ENCODE measurements at regions of chr5 and their contacts with region 1.

Region 1: GRCh38 chr5:140664359-140665119 is at the start of gene WDR55:
- DNase-seq: peak; percentile 94
- H3K4me3 Mint-ChIP-seq: peak within 1 kb of the TSS; percentile 100
- H3K27ac Mint-ChIP-seq: peak within 1 kb of the TSS; percentile 93
- H3K4me1 Mint-ChIP-seq: peaks cover 28% of the 10 kb centered on the region
- H3K27me3 Mint-ChIP-seq: no peaks in the 10 kb centered on the region
- total RNA-seq, gene WDR55: 42.7 and 43.2 TPM in 2 replicates

Region 2: DNA sequence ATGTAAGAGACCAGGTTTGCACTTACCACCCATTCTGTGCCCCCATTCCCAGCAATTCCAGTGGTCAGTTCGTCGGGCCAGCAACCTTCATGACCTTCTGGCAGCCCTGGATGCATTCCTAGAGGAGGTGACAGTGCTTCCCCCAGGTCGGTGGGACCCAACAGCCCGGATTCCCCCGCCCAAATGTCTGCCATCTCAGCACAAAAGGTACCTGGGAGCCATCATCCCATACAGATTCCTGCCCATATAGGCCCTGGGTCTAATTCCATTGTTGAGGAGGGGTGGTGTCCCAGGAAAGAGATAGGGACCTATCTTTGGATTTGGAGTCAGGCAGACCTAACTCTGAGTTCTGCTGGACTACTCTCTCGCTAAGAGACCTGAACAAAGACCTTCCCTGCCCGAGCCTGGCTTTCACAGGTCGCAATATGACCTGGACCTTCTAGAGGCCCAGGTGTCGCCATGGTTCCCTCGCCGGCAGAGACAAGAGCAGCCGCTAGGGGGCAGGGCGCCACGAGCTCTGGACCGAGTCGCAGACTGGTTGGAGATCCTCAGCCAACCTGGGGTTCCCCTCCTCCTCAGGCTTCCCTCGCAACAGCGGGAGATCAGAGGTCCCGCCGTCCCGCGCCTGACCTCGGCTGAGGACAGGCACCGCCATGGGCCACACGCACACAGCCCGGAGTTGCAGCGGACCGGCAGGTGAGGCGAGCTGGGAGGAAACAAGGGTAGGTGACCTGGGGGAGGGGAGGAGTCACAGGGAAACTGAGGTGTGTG is 301.5 kb before region 1 on chr5:
- intact Hi-C with region 1: loop called (anchors 1 kb)
- DNase-seq: peak; percentile 79
- H3K4me3 Mint-ChIP-seq: peak overlapping the region; percentile 79
- H3K27ac Mint-ChIP-seq: peak overlapping the region; percentile 73
- H3K4me1 Mint-ChIP-seq: peaks cover 6% of the 10 kb centered on the region
- H3K27me3 Mint-ChIP-seq: peaks cover 2% of the 10 kb centered on the region

Region 3: DNA sequence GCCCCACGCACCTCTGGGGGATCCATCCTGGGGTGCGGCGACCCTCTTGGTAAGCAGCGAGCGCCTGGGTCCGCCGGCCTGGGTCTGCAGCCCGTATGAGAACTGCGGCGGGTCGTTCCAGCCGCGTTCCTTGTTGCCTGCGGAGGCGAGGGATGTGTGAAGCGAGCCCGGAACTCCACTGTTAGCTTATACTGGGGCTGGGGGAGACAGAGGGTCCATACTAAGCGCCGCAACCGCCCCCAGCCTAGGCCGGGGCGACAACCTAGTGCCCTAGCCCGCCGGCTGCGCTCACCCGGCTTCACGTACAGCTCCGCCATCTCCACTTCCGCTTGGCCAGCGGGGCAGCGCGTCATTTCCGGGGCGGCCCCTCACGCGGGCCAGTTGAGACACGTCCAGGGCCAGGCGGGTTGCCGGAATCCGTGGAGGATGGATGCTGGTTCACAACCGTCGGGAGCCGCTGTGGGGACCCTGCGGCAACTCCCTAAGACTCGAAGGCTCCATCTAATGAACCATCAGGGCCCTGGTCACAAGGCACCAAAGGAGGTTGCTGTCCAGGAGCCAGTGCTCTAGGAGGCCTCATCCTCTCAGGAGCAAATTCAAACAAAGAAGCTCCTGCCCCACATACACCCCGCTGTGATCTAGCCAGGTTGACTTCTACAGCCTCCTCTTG is 107.3 kb before region 1 on chr5 and contains the start of gene SRA1:
- intact Hi-C with region 1: loop called (anchors 1 kb)
- DNase-seq: peak; percentile 90
- H3K4me3 Mint-ChIP-seq: peak within 1 kb of the TSS; percentile 88
- H3K27ac Mint-ChIP-seq: peak within 1 kb of the TSS; percentile 89
- H3K4me1 Mint-ChIP-seq: peaks cover 47% of the 10 kb centered on the region
- H3K27me3 Mint-ChIP-seq: no peaks in the 10 kb centered on the region
- total RNA-seq, gene SRA1: 55.6 and 59.2 TPM in 2 replicates

Region 4: DNA sequence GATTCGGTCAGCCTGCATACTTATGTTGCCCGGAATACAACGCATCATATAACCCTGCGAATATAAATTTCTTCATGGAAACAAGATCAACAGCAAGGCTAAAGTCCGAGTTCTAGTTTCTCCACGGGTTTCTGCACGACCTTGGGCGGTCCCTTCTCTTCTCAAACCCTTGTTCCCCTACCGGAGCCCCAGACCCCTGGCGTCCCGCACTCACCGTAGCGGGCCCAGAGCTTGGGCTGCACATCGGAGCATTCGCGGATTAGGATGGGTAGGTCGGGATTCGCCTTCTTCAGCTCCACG is 17.5 kb before region 1 on chr5:
- intact Hi-C with region 1: loop called (anchors 1 kb)
- DNase-seq: no peak
- H3K4me3 Mint-ChIP-seq: peak overlapping the region; percentile 99
- H3K27ac Mint-ChIP-seq: peak overlapping the region; percentile 67
- H3K4me1 Mint-ChIP-seq: peaks cover 38% of the 10 kb centered on the region
- H3K27me3 Mint-ChIP-seq: no peaks in the 10 kb centered on the region

Region 5: GRCh38 chr5:140700177-140701144 is 35.9 kb after region 1 on chr5 and contains the start of gene ZMAT2:
- intact Hi-C with region 1: loop called (anchors 1 kb)
- DNase-seq: peak; percentile 92
- H3K4me3 Mint-ChIP-seq: peak within 1 kb of the TSS; percentile 96
- H3K27ac Mint-ChIP-seq: peak within 1 kb of the TSS; percentile 88
- H3K4me1 Mint-ChIP-seq: peaks cover 22% of the 10 kb centered on the region
- H3K27me3 Mint-ChIP-seq: no peaks in the 10 kb centered on the region
- total RNA-seq, gene ZMAT2: 68.0 and 71.2 TPM in 2 replicates

Region 6: GRCh38 chr5:140753561-140753960 is 89.0 kb after region 1 on chr5:
- intact Hi-C with region 1: no loop called
- DNase-seq: no peak
- H3K4me3 Mint-ChIP-seq: no peak overlapping the region
- H3K27ac Mint-ChIP-seq: no peak overlapping the region
- H3K4me1 Mint-ChIP-seq: no peaks in the 10 kb centered on the region
- H3K27me3 Mint-ChIP-seq: no peaks in the 10 kb centered on the region

Region 7: GRCh38 chr5:140868721-140869554 is 204.4 kb after region 1 on chr5 and contains the start of gene PCDHA11:
- intact Hi-C with region 1: no loop called
- DNase-seq: no peak
- H3K4me3 Mint-ChIP-seq: no peak within 1 kb of the TSS
- H3K27ac Mint-ChIP-seq: no peak within 1 kb of the TSS
- H3K4me1 Mint-ChIP-seq: no peaks in the 10 kb centered on the region
- H3K27me3 Mint-ChIP-seq: no peaks in the 10 kb centered on the region
- total RNA-seq, gene PCDHA11: not detected in 2 replicates

Measured in activated T-helper 1 cell treated with anti-CD3 and anti-CD28 coated beads, Interleukin-12 subunit alpha, Interleukin-12 subunit beta, Interleukin-2, Interleukin-4 antibody, amounts not matched to agents 30 ng/mL and 10 ng/mL and 1 ng/mL, durations not matched to agents 14 hours and 24 hours and 36 hours (primary cell).